ENCODE measurements at regions of chr5 and their contacts with region 1.

Region 1: GRCh38 chr5:776792-777711 is 7.5 kb downstream of the ZDHHC11B start:
- DNase-seq: peak; percentile 20
- H3K4me3 ChIP-seq: no peak overlapping the region
- H3K27ac ChIP-seq: no peak overlapping the region
- H3K4me1 ChIP-seq: no peaks in the 10 kb centered on the region
- H3K27me3 ChIP-seq: no peaks in the 10 kb centered on the region
- CTCF ChIP-seq: no peak

Region 2: GRCh38 chr5:485946-486491 is 291.0 kb before region 1 on chr5:
- intact Hi-C with region 1: no loop called
- DNase-seq: no peak
- H3K4me3 ChIP-seq: no peak overlapping the region
- H3K27ac ChIP-seq: no peak overlapping the region
- H3K4me1 ChIP-seq: no peaks in the 10 kb centered on the region
- H3K27me3 ChIP-seq: peaks cover 23% of the 10 kb centered on the region
- CTCF ChIP-seq: no peak

Region 3: GRCh38 chr5:683551-684481 is 93.2 kb before region 1 on chr5:
- intact Hi-C with region 1: loop called (anchors 5 kb)
- DNase-seq: no peak
- H3K4me3 ChIP-seq: no peak overlapping the region
- H3K27ac ChIP-seq: no peak overlapping the region
- H3K4me1 ChIP-seq: no peaks in the 10 kb centered on the region
- H3K27me3 ChIP-seq: no peaks in the 10 kb centered on the region
- CTCF ChIP-seq: no peak

Measured in colonic mucosa (tissue), 4 donors.